Right cardiac atrium (tissue), 5 donors: ENCODE measurements at regions of chr3 and their contacts with region 1.

Region 1: DNA sequence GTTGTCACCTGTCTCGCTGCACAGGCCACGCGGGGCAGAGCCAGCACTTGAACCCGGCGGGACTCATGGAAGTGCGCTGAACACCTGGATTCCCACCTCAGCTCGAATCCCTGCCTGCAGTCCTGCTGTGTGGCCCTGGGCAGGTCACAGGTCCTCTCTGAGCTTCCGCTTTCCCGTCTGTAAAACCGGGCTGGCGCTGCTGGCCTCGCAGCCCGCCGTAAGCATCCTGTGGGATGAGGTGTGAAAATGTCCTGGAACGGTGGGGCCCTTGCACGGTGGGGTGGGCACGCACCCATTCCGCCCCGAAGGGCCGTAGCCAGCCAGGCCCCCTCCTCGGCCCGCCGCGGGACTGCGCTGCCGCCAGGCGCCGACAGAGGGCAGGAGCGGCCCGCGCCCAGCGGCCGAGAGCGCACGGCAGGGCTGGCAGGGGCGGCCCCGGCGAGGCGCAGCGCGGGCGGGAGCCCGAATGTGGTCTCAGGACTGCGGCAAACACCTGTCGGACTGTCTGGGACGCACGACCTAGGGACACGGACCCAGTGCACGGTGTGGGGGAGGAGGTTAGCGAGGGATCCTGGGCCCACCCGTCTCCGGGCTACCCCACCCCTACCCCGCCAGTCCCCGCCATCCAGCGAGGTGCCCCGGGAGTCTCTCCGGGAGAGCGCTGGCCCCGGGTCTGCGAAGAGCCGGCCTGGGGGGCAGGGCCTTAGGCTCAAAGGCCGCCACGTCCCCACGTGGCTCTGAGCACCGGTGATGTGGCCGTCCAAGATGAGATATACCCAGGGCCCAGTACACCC is 40.4 kb downstream of the DNAJB8 start:
- DNase-seq: peak; percentile 44 to 81 (median 80)
- ATAC-seq: peak; percentile 85 to 87
- H3K4me3 ChIP-seq: peak overlapping the region; percentile 37
- H3K27ac ChIP-seq: no peak overlapping the region
- H3K4me1 ChIP-seq: no peaks in the 10 kb centered on the region
- H3K27me3 ChIP-seq: no peaks in the 10 kb centered on the region

Region 2: DNA sequence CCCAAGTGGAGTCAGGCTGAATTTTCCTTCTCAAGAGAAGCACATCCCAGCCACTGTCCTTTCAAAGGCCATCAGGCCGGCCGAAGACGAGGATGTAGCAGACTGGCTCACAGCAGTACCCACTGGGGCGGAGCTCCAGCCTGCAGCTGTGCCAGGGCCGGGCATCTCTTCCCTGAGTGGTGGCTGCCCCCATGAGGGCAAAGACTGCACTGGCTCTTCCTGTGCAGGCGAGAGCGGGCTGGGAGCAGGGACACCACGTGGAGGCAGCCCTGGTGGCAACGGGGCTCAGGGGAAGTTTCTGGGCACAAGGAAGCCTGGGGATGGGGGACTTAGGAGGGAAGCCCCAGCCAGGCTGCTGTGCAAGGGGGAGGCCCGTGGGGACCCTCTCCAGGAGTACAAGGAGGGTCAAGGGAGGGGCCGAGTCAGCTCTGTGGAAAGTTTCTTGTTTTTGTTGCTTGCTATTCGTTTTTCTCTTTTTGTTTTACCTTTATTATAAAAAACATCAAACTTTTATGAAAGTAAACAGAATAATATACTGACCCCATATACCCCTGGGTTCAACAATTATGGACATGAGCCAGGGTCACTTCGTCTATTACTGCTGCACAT is 158.2 kb after region 1 on chr3:
- intact Hi-C with region 1: loop called in 3 of 4 experiments (anchors 5 to 10 kb)
- DNase-seq: peak; percentile 80 to 91 (median 83)
- ATAC-seq: peak; percentile 98 to 99
- H3K4me3 ChIP-seq: no peak overlapping the region
- H3K27ac ChIP-seq: no peak overlapping the region
- H3K4me1 ChIP-seq: no peaks in the 10 kb centered on the region
- H3K27me3 ChIP-seq: no peaks in the 10 kb centered on the region

Region 3: DNA sequence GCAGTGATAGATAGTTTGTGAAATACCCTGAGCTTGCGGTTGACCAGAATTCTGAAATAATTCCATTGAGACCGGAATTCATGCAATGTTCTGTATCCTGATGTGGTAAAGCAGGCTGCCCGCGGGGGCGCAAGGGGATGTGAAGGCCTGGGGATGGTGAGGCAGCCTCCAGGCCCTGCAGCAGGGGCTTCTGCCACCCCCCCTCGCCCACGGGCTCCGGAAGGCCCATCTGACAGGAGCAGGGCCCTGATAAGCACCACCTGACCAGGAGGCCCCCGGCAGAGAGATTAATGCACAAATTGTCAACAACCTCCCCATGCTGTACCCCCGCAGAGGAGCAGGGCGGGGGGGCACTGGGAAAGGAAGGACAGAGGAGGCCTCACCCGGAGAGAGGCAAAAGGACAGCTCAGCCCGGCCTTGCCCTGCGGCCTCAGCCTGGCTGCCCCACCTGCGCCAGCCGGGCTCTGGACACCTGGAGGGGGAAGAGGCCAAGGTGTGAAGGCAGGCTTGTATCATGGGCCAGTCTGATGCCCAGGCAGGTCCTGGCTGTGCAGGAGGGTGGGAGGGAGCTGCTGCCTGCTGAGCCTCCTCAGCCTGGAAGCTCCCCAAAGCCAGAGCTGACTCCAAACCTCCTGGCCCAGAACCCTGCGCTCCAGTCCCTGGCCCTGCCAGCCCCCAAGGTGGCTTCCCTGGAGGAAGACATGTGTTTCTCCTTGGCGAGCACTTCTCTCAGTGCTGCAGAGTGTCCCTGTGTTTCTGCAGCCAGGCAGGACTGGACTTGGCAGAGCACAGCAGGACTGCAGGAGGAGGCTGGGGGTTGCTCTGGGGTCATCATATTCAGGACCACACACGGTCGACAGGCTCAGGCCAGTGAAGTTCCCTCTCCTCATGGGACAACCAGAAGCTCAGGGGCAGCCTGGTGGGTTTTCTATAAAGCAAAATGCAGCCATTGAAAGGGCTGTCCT is 177.8 kb after region 1 on chr3:
- intact Hi-C with region 1: loop called in 2 of 4 experiments (anchors 5 to 10 kb)
- DNase-seq: no peak
- ATAC-seq: no peak
- H3K4me3 ChIP-seq: no peak overlapping the region
- H3K27ac ChIP-seq: no peak overlapping the region
- H3K4me1 ChIP-seq: no peaks in the 10 kb centered on the region
- H3K27me3 ChIP-seq: no peaks in the 10 kb centered on the region